B cell (primary cell): ENCODE measurements at regions of chr4 and their contacts with region 1.

Region 1: GRCh38 chr4:119286377-119287002 is 35.4 kb downstream of the FABP2 start:
- DNase-seq: peak; percentile 60
- ATAC-seq: no peak
- H3K4me3 ChIP-seq: no peak overlapping the region
- H3K4me3 Mint-ChIP-seq: no peak overlapping the region
- H3K27ac ChIP-seq: no peak overlapping the region
- H3K27ac Mint-ChIP-seq: no peak overlapping the region
- H3K4me1 ChIP-seq: peaks cover 0 to 5% of the 10 kb centered on the region in 2 donors
- H3K4me1 Mint-ChIP-seq: peaks cover 14% of the 10 kb centered on the region
- H3K27me3 ChIP-seq: no peaks in the 10 kb centered on the region
- H3K27me3 Mint-ChIP-seq: no peaks in the 10 kb centered on the region
- CTCF ChIP-seq: peak; percentile 81

Region 2: GRCh38 chr4:118883861-118884260 is 402.6 kb before region 1 on chr4:
- CTCF ChIA-PET with region 1: no interaction called
- POLR2A ChIA-PET with region 1: no interaction called
- intact Hi-C with region 1: no loop called
- DNase-seq: no peak
- ATAC-seq: no peak
- H3K4me3 ChIP-seq: no peak overlapping the region
- H3K4me3 Mint-ChIP-seq: no peak overlapping the region
- H3K27ac ChIP-seq: no peak overlapping the region
- H3K27ac Mint-ChIP-seq: no peak overlapping the region
- H3K4me1 ChIP-seq: peaks cover 5 to 6% of the 10 kb centered on the region in 2 donors
- H3K4me1 Mint-ChIP-seq: peaks cover 8% of the 10 kb centered on the region
- H3K27me3 ChIP-seq: peaks cover 0 to 8% (median 3%) of the 10 kb centered on the region in 4 experiments
- H3K27me3 Mint-ChIP-seq: peaks cover 35% of the 10 kb centered on the region
- CTCF ChIP-seq: no peak

Region 3: GRCh38 chr4:118981839-118982381 is 304.6 kb before region 1 on chr4:
- CTCF ChIA-PET with region 1: interaction called, 4 read pairs
- POLR2A ChIA-PET with region 1: no interaction called
- intact Hi-C with region 1: loop called (anchors 1 kb)
- DNase-seq: peak; percentile 60
- ATAC-seq: peak; percentile 53
- H3K4me3 ChIP-seq: no peak overlapping the region
- H3K4me3 Mint-ChIP-seq: no peak overlapping the region
- H3K27ac ChIP-seq: no peak overlapping the region
- H3K27ac Mint-ChIP-seq: no peak overlapping the region
- H3K4me1 ChIP-seq: no peaks in the 10 kb centered on the region
- H3K4me1 Mint-ChIP-seq: peaks cover 2% of the 10 kb centered on the region
- H3K27me3 ChIP-seq: no peaks in the 10 kb centered on the region
- H3K27me3 Mint-ChIP-seq: peaks cover 13% of the 10 kb centered on the region
- CTCF ChIP-seq: peak; percentile 90

Region 4: DNA sequence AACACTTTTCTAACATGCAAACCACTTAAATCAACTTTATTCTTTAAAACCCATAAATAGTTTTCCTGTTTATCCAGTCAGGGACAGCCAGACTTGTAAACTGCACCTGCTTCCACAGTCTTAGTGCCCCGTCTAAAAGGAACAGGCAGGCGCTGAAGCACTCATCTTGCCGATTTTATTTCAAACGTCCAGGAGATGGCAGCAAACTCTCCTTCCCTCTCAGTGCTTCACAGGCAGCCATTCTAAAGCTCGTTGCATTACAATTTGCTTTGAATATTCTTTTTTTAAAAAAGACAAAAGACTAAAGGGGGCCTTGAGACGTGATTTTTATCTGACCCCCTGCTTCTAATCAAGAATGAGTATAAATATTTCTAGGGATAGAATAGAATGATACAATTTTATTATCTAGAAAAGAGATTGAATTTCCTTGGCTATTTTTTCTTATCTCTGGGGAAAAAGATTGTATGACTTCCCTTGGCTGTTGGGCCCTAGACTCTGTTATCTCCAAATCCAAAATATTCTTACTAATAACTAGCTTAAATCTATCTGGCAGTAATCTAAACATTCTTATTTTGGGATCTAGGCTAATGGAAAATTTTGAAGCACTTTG is 244.4 kb before region 1 on chr4:
- CTCF ChIA-PET with region 1: interaction called, 54 read pairs
- POLR2A ChIA-PET with region 1: no interaction called
- intact Hi-C with region 1: loop called (anchors 1 kb)
- DNase-seq: peak; percentile 74
- ATAC-seq: peak; percentile 81
- H3K4me3 ChIP-seq: no peak overlapping the region
- H3K4me3 Mint-ChIP-seq: no peak overlapping the region
- H3K27ac ChIP-seq: no peak overlapping the region
- H3K27ac Mint-ChIP-seq: no peak overlapping the region
- H3K4me1 ChIP-seq: peaks cover 0 to 4% of the 10 kb centered on the region in 2 donors
- H3K4me1 Mint-ChIP-seq: peaks cover 6% of the 10 kb centered on the region
- H3K27me3 ChIP-seq: no peaks in the 10 kb centered on the region
- H3K27me3 Mint-ChIP-seq: no peaks in the 10 kb centered on the region
- CTCF ChIP-seq: peak; percentile 88

Region 5: DNA sequence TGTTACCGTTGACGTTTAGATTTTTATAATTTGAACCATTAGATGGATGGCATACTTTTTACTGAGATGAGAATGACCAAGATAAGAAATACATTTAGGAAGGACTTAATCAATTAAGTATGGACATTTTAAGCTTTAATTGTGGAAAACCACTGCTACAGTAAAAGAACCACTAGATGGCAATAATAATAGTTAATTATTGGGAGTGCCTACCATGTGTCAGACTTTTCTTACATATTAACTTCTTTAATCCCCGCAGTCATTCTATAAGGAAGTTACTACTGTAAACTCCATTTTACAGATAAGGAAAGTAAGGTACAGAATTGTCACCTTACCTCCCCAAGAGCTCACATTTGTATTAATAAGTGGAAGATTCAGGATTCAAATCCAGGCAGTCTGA is 199.4 kb before region 1 on chr4:
- CTCF ChIA-PET with region 1: interaction called, 4 read pairs
- POLR2A ChIA-PET with region 1: no interaction called
- intact Hi-C with region 1: loop called (anchors 1 kb)
- DNase-seq: no peak
- ATAC-seq: no peak
- H3K4me3 ChIP-seq: no peak overlapping the region
- H3K4me3 Mint-ChIP-seq: no peak overlapping the region
- H3K27ac ChIP-seq: no peak overlapping the region
- H3K27ac Mint-ChIP-seq: no peak overlapping the region
- H3K4me1 ChIP-seq: no peaks in the 10 kb centered on the region
- H3K4me1 Mint-ChIP-seq: peaks cover 28% of the 10 kb centered on the region
- H3K27me3 ChIP-seq: no peaks in the 10 kb centered on the region
- H3K27me3 Mint-ChIP-seq: peaks cover 7% of the 10 kb centered on the region
- CTCF ChIP-seq: no peak